Right ventricle myocardium superior (tissue), 1 donor: ENCODE measurements at regions of chr3 and their contacts with region 1.

Region 1: GRCh38 chr3:195727606-195728195 is 6.9 kb downstream of the MUC20 start:
- DNase-seq: no peak
- ATAC-seq: no peak

Region 2: DNA sequence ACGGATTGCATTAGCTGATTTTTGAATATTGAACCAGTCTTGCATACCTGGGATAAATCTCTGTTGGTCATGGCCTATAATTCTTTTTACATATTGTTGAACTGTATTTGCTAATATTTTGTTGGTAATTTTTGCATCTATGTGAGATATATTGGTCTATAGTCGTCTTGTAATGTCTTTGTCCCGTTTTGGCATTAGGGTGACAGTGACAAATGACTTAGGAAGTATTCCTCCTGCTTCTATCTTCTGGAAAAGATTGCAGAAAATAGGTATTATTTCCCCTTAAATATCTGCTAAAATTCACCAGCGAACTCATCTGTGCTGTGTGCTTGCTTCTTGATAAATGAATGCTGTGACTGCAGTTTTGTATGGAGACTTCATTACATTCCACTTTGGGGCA is 16.7 kb after region 1 on chr3:
- intact Hi-C with region 1: loop called (anchors 2 kb)
- DNase-seq: no peak
- ATAC-seq: no peak